Head of caudate nucleus (tissue), 42 donors: ENCODE measurements at regions of chr15 and their contacts with region 1.

Region 1: GRCh38 chr15:64430000-64430735 is 30.2 kb upstream of the ZNF609 start:
- DNase-seq: no peak

Region 2: DNA sequence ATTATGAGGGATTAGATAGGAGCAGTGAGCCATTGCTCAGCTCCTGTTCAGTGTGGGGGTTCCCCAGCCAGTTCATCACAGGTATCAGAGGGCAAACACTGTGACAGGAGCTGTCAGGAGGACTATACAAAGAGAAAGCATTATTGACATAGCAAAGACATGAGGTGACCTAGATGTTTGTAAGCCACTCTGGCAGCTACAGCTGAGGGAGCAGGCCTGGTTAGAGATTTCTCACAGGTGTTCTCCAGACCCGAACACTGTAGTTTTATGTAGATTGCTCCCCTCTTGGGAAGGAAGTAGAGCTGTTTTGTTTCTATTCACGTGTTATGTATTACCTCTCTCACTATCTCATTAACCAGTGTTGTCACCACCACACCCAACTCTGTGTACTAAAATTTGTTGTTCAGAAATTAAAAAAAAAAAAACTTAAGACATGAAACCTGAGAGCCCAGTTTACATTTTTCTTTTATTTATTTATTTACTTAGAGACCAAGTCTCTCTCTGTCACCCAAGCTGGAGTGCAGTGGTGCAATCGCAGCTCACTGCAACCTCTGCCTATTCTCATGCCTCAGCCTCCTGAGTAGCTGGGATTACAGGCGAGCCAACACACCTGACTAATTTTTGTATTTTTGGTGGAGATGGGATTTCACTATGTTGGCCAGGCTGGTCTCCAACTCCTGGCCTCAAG is 221.5 kb after region 1 on chr15:
- intact Hi-C with region 1: loop called (anchors 10 kb)
- DNase-seq: no peak